Brain microvascular endothelial cell (primary cell): ENCODE measurements at regions of chr2 and their contacts with region 1.

Region 1: GRCh38 chr2:105521205-105521604 is 122.4 kb upstream of the FHL2 start:
- DNase-seq: no peak
- H3K4me3 ChIP-seq: no peak overlapping the region
- H3K27ac ChIP-seq: no peak overlapping the region
- H3K27me3 ChIP-seq: no peaks in the 10 kb centered on the region
- CTCF ChIP-seq: peak; percentile 2

Region 2: DNA sequence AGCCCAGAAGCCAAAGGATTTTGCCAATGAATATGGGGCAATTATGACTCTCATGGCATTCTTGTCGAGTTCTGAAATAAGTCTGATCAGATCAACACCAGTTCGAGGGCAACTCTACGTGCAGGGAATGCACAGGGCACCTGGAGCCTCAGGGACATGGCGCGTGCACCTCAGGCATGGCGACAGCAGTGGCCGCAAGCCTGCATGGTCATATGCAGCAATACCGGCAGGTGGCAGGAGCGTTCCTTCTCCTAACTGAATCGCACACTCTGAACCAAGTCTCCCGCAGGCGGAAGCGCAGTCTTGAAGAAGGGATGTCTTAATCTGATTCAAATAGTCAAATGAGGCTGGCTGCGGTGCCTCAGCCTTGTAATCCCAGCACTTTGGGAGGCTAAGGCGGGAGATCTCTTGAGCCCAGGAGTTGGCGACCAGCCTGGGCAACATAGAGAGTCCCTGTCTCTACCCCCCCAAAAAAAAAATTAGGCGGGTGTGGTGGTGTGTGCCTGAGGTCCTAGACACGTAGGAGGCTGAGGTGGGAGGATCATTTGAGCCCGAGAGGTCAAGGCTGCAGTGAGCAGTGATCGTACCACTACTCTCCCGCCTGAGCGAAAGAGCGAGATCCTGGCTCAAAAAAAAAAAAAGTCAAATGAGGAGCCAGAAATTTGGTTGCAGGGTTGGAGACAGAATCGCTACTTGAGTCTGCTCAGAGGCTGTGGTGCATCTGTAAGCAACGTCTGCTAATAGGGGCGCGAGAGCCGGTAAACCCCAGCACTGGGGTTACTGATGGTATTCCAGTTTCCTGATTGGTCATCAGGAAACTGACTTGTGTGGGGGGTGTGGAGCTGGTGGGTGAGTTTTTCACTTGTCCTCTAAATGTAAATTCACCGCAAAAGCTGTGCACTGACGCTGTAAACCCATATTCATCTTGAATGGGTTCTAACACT is 151.2 kb before region 1 on chr2:
- in situ Hi-C with region 1: loop called (anchors 25 kb)
- DNase-seq: peak; percentile 81
- H3K4me3 ChIP-seq: no peak overlapping the region
- H3K27ac ChIP-seq: peak overlapping the region; percentile 45
- H3K27me3 ChIP-seq: no peaks in the 10 kb centered on the region
- CTCF ChIP-seq: peak; percentile 88

Region 3: DNA sequence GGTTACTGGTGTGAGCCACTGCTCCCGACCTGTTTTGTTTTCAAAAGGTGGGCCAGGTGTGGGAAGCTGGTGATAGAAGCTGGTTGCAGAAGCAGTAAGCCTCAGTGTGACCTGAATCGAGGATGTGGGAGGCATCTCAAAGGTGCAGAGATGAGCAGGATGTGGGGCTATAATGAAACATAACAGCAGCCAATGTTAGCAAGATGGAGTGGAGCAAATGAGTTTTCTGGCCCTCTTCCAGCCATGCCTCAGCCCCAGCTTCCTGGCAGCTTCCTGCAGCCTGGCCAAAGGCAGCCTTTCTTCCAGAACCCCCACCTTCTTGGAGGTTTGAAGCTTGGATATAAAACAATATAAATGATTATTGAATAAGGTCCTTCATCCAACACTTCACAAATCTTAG is 408.3 kb after region 1 on chr2:
- in situ Hi-C with region 1: no loop called
- DNase-seq: no peak
- H3K4me3 ChIP-seq: no peak overlapping the region
- H3K27ac ChIP-seq: no peak overlapping the region
- H3K27me3 ChIP-seq: no peaks in the 10 kb centered on the region
- CTCF ChIP-seq: no peak